Head of caudate nucleus (tissue), 42 donors: ENCODE measurements at regions of chr22 and their contacts with region 1.

Region 1: DNA sequence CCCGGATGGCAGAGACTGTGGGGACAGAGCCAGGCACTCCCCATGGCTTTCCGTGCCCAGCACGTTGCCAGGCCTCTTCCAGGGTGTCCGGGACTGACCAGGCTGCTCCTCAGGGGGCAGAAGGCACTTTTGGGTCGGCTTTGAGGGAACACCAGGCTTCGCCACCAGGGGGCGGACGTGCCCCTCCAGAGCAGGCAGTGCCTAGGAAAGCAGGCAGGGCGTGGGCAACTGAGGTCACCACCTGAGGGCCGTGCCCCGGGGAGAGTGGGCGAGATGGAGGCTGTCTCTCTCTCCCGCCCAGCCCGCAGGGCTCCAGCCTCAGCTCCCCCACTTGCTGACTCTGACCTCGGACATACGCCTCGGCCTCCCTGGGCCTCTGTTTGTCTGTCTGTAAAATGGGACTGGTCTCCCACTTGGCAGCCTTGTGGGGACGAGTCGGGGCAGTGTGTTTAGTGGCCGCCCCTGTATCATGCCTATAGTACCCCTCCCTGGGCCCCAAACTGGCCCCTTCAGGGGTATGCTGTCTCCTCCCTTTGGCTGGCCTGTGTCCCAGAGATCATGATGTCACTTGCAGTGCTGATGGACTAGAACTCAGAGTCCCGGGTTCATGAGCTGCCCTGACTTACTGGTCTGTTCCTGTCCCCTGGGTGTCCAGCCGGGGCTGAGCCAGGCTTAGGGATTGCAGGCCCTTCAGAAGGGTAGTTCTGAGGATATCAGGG is 4.4 kb upstream of the PRR5 start:
- DNase-seq: peak; percentile 44 to 89 (median 74)

Region 2: DNA sequence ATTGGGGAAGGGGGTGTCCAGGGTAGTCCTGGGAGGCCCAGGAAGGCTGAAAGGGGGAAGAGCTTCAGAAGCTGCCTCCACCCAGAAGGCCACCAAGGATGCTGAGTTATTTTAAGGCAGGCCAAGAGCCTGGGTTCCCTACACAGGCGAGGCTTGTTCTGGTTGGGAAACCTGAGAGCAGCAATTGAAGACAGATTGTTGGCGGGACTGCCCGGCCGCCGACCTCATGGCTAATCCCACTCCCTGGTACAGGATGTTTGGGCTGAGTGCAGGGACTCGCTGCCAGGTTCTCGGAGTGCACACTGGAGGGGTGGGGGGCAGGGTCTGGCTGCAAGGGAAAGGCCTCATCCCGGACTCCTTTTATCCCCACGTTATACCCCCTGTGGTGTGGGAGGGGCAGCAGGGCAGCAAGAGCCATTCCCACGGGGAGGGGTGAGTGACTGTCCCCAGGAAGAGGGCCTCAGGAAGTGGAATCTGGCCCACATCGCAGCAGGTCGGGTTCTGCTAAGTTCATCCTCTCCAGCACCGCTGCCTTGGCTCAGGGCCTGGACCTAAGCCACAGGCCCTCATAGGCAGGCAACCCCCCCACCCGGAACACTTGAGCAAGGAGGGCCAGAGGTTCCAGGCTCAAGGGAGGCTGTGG is 39.1 kb before region 1 on chr22:
- intact Hi-C with region 1: no loop called
- DNase-seq: peak in 27 of 42 donors; percentile 9 to 78 (median 54)

Region 3: GRCh38 chr22:44729391-44730021 is 31.9 kb after region 1 on chr22:
- intact Hi-C with region 1: loop called (anchors 5 kb)
- DNase-seq: peak; percentile 44 to 87 (median 72)